Right ventricle myocardium inferior (tissue), 1 donor: ENCODE measurements at regions of chr21 and their contacts with region 1.

Region 1: DNA sequence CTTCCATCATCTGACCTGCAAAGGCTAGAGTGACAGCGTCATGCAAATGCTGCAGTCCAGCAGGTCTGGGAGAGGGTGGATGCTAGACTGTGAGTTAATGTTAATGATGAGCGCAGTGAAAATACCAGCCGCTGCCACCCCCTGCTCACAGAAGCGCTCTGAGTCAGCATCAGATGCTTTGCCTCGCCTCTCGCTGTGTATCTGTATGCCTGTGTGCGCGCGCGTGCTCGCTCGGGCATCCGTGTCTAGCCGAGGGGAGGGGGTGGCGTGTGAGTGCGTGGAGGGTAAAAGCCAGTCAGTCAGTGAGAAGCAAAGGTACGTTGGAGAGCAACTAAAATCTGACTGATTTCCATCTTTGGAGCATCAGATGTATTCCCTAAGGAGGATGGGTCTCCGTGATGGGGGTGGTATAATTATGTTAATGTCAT is 858.7 kb downstream of the USP25 start:
- DNase-seq: peak; percentile 74
- ATAC-seq: peak; percentile 79

Region 2: DNA sequence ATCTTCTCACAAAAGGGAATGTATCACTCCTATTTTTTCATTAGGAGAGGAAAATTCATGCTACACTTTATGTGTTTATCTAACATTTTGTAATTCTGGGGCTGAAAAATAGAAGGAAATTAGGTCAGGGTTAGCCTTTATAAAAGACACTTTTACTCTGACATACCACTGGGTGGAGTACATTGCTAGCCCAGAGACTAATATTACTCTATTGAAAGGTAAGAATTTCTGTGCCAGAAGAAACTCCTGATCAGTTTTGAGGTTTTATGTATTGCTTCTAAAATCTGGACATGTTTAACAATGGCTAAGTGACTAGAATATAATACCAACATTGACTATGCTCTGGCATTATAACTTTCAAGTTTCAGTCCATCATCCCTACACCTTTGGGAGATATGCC is 134.0 kb before region 1 on chr21:
- intact Hi-C with region 1: loop called (anchors 10 kb)
- DNase-seq: no peak
- ATAC-seq: peak; percentile 65